ENCODE measurements at regions of chr10 and their contacts with region 1.

Region 1: DNA sequence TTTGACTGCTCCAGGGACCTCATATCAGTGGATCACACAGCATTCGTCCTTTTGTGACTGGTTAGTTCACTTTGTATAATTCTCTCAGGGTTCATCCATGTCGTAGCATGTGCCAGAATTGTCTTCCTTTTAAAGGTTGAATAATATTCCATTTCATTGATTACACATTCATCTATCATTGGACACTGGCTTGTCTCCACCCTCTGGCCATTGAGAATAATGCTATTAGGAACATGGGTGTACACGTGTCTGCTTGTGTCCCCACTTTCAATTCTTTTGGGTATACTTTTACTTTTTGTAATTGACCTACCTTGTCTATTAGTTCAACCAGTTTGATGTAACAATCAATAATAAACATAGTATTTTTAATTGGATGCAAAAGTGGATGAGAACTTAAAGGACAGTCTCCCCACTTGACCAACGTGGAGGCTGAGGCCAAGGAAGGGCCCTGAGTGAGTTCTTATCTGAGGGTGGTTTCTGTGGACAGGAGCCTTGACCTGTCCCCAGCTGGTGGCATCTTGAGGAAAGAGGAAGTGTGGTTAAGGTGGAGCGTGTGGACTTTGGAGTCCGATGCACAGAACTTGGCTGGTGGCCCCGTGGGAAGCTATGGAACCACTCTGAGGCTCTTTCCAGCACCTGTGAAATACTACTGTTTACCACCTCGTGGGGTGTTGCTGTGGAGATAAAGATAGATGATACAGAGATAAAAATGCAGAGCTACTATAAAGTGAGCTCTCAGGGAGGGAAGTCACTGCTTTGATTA is 16.6 kb downstream of the WDFY4 start:
- DNase-seq: no peak
- H3K4me3 ChIP-seq: no peak overlapping the region
- H3K27ac ChIP-seq: no peak overlapping the region
- H3K4me1 ChIP-seq: no peaks in the 10 kb centered on the region
- H3K27me3 ChIP-seq: no peaks in the 10 kb centered on the region; a peak in 1 of 7 replicates
- CTCF ChIP-seq: no peak
- EP300 ChIP-seq: no peak
- POLR2A ChIP-seq: no peak
- RAD21 ChIP-seq: no peak

Region 2: DNA sequence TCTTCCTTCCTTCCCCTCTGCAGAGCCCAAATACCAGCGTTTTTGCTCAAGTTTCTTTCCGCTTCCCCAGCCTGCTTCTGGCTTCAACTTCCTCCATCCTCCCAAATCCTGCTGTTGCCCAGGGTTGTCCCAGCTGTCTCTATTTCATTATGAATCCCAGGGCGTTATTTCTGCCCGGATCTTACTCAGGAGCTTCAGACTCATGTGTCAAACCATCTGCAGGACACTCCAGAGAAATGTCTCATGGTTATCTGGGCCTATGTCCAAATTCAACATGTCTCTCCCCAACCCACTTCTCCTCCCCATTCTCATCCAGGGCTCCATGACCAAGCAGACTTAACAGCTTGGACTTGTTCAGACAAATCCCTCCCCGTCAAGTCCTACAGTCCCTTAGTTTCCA is 112.1 kb before region 1 on chr10:
- CTCF ChIA-PET with region 1: no interaction called
- POLR2A ChIA-PET with region 1: no interaction called
- DNase-seq: no peak
- H3K4me3 ChIP-seq: no peak overlapping the region
- H3K27ac ChIP-seq: no peak overlapping the region
- H3K4me1 ChIP-seq: peaks cover 0 to 4% (median 3%) of the 10 kb centered on the region in 4 experiments; a peak in 5 of 7 replicates
- H3K27me3 ChIP-seq: no peaks in the 10 kb centered on the region
- CTCF ChIP-seq: no peak
- EP300 ChIP-seq: no peak
- POLR2A ChIP-seq: no peak
- RAD21 ChIP-seq: no peak

Region 3: DNA sequence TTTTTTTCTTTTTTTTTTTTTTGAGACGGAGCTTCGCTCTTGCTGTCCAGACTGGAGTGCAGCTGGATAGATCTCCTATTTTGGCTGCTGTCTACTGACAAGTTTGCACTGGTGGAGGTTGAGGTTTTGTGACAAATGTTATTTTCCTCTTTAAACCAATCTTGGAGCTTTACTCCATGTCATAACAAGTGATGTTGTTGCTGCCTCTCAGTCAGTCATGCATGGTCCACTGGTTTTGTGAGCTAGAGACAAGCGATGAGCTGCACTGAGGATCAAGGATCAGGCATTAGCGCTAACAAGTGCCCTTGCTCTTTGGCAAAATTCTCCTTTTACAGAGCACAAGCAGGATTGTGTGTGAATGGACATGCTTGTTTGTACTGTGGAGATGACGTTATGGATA is 17.5 kb before region 1 on chr10:
- CTCF ChIA-PET with region 1: no interaction called
- POLR2A ChIA-PET with region 1: no interaction called
- DNase-seq: no peak
- H3K4me3 ChIP-seq: no peak overlapping the region
- H3K27ac ChIP-seq: no peak overlapping the region
- H3K4me1 ChIP-seq: no peaks in the 10 kb centered on the region
- H3K27me3 ChIP-seq: no peaks in the 10 kb centered on the region
- CTCF ChIP-seq: no peak
- EP300 ChIP-seq: no peak
- POLR2A ChIP-seq: no peak
- RAD21 ChIP-seq: no peak

Region 4: DNA sequence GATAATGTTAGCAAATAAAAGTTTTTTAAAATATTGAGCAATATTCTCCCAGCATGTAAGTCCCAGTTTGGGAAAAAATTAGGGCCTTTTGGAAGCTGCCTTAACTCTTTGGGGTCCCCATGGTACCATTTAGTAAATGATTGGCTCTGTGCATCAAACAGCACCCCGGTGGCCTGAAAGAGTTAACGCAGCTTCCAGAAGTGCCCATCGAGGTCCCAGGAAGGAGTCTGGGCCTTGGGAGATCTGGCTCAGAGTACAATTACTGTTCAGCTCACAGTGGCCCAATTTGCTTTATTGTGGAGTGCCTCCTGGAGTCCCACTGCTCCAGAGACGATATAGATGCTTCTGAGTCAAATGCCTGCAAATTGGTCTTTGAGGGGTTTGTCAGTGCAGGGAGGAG is 15.1 kb after region 1 on chr10:
- CTCF ChIA-PET with region 1: interaction called, 15 read pairs
- POLR2A ChIA-PET with region 1: no interaction called
- DNase-seq: no peak
- H3K4me3 ChIP-seq: no peak overlapping the region
- H3K27ac ChIP-seq: no peak overlapping the region
- H3K4me1 ChIP-seq: no peaks in the 10 kb centered on the region; a peak in 1 of 7 replicates
- H3K27me3 ChIP-seq: no peaks in the 10 kb centered on the region
- CTCF ChIP-seq: peak in 1 of 3 experiments; percentile 2; a peak in 1 of 4 replicates
- EP300 ChIP-seq: no peak
- POLR2A ChIP-seq: no peak
- RAD21 ChIP-seq: peak in 1 of 2 experiments; percentile 7; a peak in 1 of 4 replicates

Region 5: DNA sequence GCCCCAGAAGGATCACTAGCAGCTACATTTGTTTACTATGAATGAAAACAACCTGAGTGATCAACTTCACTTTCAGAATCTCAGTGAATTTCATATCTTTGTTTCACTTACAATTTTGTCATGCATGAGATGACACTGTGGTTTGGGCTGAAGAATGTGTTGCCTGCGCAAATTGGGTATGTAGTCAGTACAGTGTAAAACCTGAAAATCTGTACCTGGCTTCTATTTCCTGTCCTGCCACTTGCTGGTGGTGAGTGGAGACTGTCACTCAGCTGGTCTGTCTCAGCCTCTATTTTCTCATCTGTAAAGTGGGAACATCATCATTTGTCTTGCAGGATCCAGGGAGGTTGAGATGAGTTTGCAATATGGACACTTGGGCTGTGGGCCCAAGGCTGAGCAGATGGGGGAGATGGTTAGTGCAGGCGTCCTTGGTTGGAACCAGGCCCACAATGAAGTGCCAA is 101.3 kb after region 1 on chr10:
- CTCF ChIA-PET with region 1: no interaction called
- POLR2A ChIA-PET with region 1: no interaction called
- DNase-seq: no peak
- H3K4me3 ChIP-seq: no peak overlapping the region
- H3K27ac ChIP-seq: no peak overlapping the region
- H3K4me1 ChIP-seq: peaks cover 0 to 9% (median 3%) of the 10 kb centered on the region in 4 experiments; a peak in 3 of 7 replicates
- H3K27me3 ChIP-seq: peaks cover 0 to 4% (median 2%) of the 10 kb centered on the region in 4 experiments; a peak in 2 of 7 replicates
- CTCF ChIP-seq: no peak
- EP300 ChIP-seq: no peak
- POLR2A ChIP-seq: no peak
- RAD21 ChIP-seq: no peak